ENCODE measurements at regions of chr9 and their contacts with region 1.

Region 1: GRCh38 chr9:131349881-131350563 is 43.9 kb upstream of the PRRC2B start:
- DNase-seq: peak; percentile 75 to 93 (median 88)
- ATAC-seq: peak; percentile 99
- H3K4me3 ChIP-seq: no peak overlapping the region
- H3K4me3 Mint-ChIP-seq: peak overlapping the region; percentile 43
- H3K27ac ChIP-seq: no peak overlapping the region
- H3K27ac Mint-ChIP-seq: peak overlapping the region; percentile 49
- H3K4me1 ChIP-seq: peaks cover 9% of the 10 kb centered on the region
- H3K4me1 Mint-ChIP-seq: peaks cover 6% of the 10 kb centered on the region
- H3K27me3 ChIP-seq: no peaks in the 10 kb centered on the region
- H3K27me3 Mint-ChIP-seq: peaks cover 3% of the 10 kb centered on the region
- CTCF ChIP-seq: peak; percentile 81

Region 2: DNA sequence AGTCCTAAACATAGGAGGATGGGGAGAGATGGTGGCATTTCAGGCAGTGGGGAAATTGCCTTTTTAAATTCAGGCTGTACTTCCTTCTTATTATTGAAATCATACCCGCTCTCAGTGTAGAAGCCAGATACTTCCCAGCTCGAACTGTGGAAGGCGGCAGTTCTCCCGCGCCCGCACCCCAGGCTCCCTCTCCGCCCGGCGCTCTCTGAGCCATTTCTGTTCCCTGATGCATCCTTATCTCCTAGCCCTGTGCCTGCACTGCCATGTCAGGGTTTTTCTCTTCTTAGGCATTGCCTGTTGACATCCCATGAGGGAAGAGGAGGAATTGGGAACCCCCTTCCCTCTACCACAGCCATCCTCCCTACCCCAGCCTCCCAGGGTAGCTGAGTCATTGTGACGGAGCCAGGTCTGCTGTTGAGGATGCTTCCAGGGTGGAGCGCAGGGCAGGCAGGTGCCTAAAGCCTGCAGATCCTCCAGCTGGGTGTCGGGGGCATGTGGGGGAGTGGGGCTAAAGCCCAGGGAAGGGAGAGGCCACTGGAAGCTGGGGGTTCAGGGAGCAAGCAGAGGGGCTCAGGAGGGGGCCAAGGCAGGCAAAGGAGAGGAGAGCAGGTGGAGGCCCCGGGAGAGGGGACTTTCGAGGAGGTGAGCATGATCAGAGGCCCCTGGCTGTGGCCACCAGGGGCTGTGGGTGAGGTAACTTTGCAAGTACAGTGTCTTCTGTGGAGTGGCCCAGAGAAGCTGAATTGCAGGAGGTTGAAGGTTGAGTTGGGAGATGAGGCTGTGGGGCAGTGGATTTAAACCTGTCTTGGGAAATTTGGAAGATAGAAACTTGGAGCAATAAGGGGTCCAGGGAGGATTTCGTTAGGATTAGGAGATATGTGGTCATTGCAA is 324.8 kb before region 1 on chr9:
- CTCF ChIA-PET with region 1: no interaction called
- POLR2A ChIA-PET with region 1: no interaction called
- intact Hi-C with region 1: no loop called
- DNase-seq: no peak
- ATAC-seq: no peak
- H3K4me3 ChIP-seq: no peak overlapping the region
- H3K4me3 Mint-ChIP-seq: no peak overlapping the region
- H3K27ac ChIP-seq: no peak overlapping the region
- H3K27ac Mint-ChIP-seq: no peak overlapping the region
- H3K4me1 ChIP-seq: no peaks in the 10 kb centered on the region
- H3K4me1 Mint-ChIP-seq: no peaks in the 10 kb centered on the region
- H3K27me3 ChIP-seq: no peaks in the 10 kb centered on the region
- H3K27me3 Mint-ChIP-seq: peaks cover 11% of the 10 kb centered on the region
- CTCF ChIP-seq: no peak

Region 3: DNA sequence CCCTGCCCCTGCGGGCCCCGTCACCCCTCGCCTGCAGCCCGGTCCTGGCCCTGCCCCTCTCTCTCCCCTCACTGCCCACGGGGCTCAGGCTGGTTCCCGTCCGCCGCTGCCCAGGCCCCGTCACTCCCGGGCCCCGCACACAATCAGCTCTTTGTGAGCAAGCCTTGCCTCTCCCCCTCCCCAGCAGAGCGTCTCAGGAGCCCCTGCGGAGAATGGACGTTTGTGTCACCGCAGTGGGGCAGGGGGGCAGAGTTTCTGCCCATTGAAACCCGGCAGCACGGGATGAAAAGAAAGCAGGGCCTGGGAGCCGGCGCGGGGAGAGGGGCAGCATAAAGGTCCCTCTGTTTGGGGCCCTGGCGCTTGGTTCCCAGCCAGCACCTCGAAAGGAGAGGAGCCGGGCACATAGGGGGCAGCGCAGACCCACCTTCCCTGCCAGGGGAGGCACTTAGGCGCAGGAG is 238.1 kb before region 1 on chr9:
- CTCF ChIA-PET with region 1: no interaction called
- POLR2A ChIA-PET with region 1: no interaction called
- intact Hi-C with region 1: no loop called
- DNase-seq: no peak
- ATAC-seq: no peak
- H3K4me3 ChIP-seq: no peak overlapping the region
- H3K4me3 Mint-ChIP-seq: no peak overlapping the region
- H3K27ac ChIP-seq: no peak overlapping the region
- H3K27ac Mint-ChIP-seq: no peak overlapping the region
- H3K4me1 ChIP-seq: no peaks in the 10 kb centered on the region
- H3K4me1 Mint-ChIP-seq: no peaks in the 10 kb centered on the region
- H3K27me3 ChIP-seq: no peaks in the 10 kb centered on the region
- H3K27me3 Mint-ChIP-seq: no peaks in the 10 kb centered on the region
- CTCF ChIP-seq: no peak

Region 4: GRCh38 chr9:131366761-131367401 is 16.9 kb after region 1 on chr9:
- CTCF ChIA-PET with region 1: interaction called, 23 read pairs
- POLR2A ChIA-PET with region 1: no interaction called
- intact Hi-C with region 1: loop called in 1 of 2 experiments (anchors 2 kb)
- DNase-seq: peak in 2 of 9 experiments; percentile 35 to 48
- ATAC-seq: no peak
- H3K4me3 ChIP-seq: no peak overlapping the region
- H3K4me3 Mint-ChIP-seq: no peak overlapping the region
- H3K27ac ChIP-seq: no peak overlapping the region
- H3K27ac Mint-ChIP-seq: no peak overlapping the region
- H3K4me1 ChIP-seq: peaks cover 7% of the 10 kb centered on the region
- H3K4me1 Mint-ChIP-seq: peaks cover 13% of the 10 kb centered on the region
- H3K27me3 ChIP-seq: no peaks in the 10 kb centered on the region
- H3K27me3 Mint-ChIP-seq: no peaks in the 10 kb centered on the region
- CTCF ChIP-seq: no peak

Region 5: DNA sequence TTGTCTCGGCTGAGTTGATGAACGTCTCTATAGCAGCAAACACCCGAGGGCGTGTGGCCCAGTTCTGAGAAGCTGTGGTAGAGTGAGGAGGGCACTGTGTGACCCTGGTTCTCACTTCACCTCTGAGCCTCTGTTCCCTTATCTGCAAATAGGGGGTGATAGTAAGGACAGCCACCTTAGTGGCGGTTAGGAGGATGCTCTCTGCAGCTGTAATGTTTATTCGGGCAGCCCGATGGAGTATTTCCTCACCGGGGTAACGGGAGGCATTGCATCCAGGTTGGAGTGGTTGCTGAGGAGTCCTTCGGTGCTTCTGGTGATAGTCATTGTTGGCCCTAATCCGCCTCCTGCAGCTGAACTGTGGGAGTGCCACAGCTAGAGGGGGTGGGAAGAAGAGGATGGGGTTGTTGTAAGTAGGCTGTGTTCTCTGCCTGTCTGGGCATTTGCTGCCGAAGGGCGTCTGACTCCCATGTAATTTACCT is 57.7 kb after region 1 on chr9:
- CTCF ChIA-PET with region 1: interaction called, 41 read pairs
- POLR2A ChIA-PET with region 1: no interaction called
- intact Hi-C with region 1: loop called (anchors 1 kb)
- DNase-seq: peak in 7 of 9 experiments; percentile 28 to 86 (median 66)
- ATAC-seq: peak; percentile 68
- H3K4me3 ChIP-seq: peak overlapping the region; percentile 42 to 47
- H3K4me3 Mint-ChIP-seq: peak overlapping the region; percentile 82
- H3K27ac ChIP-seq: peak overlapping the region; percentile 53 to 78
- H3K27ac Mint-ChIP-seq: peak overlapping the region; percentile 88
- H3K4me1 ChIP-seq: peaks cover 88% of the 10 kb centered on the region
- H3K4me1 Mint-ChIP-seq: peaks cover 90% of the 10 kb centered on the region
- H3K27me3 ChIP-seq: no peaks in the 10 kb centered on the region
- H3K27me3 Mint-ChIP-seq: no peaks in the 10 kb centered on the region
- CTCF ChIP-seq: peak; percentile 63

Region 6: DNA sequence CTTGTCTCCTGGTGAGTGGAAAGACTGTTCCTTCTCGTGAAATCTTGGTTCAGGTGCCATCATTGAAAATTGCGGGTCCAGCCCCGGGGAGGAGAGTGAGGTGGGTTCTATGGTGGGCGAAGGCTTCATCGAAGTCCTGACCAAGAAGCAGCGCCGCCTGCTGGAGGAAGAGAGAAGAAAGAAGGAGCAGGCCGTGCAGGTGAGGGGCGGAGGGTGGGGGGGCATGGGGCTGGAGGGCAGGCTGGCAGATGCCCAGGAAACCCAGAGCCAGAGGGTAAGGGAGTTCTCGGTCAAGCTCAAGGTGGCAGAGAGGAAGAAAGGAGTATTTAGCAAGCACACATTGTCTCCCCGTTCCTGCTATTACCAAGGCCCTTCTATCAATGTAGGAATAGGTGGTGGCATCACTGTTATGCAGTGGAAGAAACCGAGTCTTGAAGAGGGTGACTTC is 128.4 kb after region 1 on chr9:
- CTCF ChIA-PET with region 1: interaction called, 49 read pairs
- POLR2A ChIA-PET with region 1: no interaction called
- intact Hi-C with region 1: loop called (anchors 1 kb)
- DNase-seq: peak; percentile 39 to 76 (median 65)
- ATAC-seq: peak; percentile 70
- H3K4me3 ChIP-seq: no peak overlapping the region
- H3K4me3 Mint-ChIP-seq: no peak overlapping the region
- H3K27ac ChIP-seq: no peak overlapping the region
- H3K27ac Mint-ChIP-seq: no peak overlapping the region
- H3K4me1 ChIP-seq: peaks cover 5% of the 10 kb centered on the region
- H3K4me1 Mint-ChIP-seq: peaks cover 2% of the 10 kb centered on the region
- H3K27me3 ChIP-seq: no peaks in the 10 kb centered on the region
- H3K27me3 Mint-ChIP-seq: no peaks in the 10 kb centered on the region
- CTCF ChIP-seq: peak; percentile 60

Region 7: DNA sequence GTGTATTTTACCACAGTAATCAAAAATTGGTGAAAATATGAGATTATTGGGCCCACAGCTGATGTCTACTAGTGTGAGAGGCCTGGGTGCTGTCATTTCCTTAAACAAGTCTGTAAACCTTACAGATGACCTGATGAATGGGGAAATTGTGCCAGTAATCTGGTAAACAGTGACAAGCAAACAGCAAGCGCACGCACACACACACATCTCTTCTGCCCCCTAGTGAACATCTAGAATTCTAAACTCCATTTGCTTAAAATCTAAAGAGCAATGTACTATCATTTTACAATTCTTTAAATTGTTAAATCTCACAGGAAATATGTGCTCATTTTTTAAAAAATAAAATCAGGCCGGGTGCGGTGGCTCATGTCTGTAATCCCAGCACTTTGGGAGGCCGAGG is 397.3 kb after region 1 on chr9:
- CTCF ChIA-PET with region 1: interaction called, 5 read pairs
- POLR2A ChIA-PET with region 1: no interaction called
- intact Hi-C with region 1: loop called in 1 of 2 experiments (anchors 1 kb)
- DNase-seq: peak in 4 of 9 experiments; percentile 33 to 73 (median 49)
- ATAC-seq: peak; percentile 50
- H3K4me3 ChIP-seq: no peak overlapping the region
- H3K4me3 Mint-ChIP-seq: no peak overlapping the region
- H3K27ac ChIP-seq: no peak overlapping the region
- H3K27ac Mint-ChIP-seq: peak overlapping the region; percentile 39
- H3K4me1 ChIP-seq: peaks cover 23% of the 10 kb centered on the region
- H3K4me1 Mint-ChIP-seq: peaks cover 36% of the 10 kb centered on the region
- H3K27me3 ChIP-seq: no peaks in the 10 kb centered on the region
- H3K27me3 Mint-ChIP-seq: no peaks in the 10 kb centered on the region
- CTCF ChIP-seq: peak; percentile 39